Calu3 (cell line): ENCODE measurements at regions of chr17 and their contacts with region 1.

Region 1: DNA sequence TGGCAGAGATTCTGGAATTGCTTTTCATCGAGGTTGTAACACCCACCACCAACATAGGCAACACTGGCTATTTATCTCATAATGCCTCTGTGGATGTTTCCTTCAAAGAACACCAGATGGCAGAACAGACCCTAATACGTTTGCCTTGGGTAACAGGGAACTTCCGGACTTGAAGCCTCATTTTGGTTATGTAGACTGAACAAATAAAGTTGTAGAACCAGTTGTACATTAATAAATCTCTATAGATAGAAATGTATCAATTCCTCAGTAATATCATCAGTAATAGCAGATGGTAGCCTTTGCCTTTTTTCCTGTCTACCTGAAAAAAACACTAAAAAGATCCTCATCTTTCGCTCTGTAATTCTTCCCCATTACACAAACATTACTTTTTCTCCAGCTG is 25.9 kb upstream of the APOH start:
- DNase-seq: peak; percentile 39
- H3K4me3 Mint-ChIP-seq: no peak overlapping the region
- H3K27ac Mint-ChIP-seq: no peak overlapping the region
- H3K4me1 Mint-ChIP-seq: no peaks in the 10 kb centered on the region
- H3K27me3 Mint-ChIP-seq: no peaks in the 10 kb centered on the region
- CTCF ChIP-seq: peak; percentile 73

Region 2: GRCh38 chr17:66275651-66276050 is 20.5 kb after region 1 on chr17:
- CTCF ChIA-PET with region 1: interaction called, 5 read pairs
- intact Hi-C with region 1: loop called (anchors 1 kb)
- DNase-seq: peak; percentile 73
- H3K4me3 Mint-ChIP-seq: peak overlapping the region; percentile 33
- H3K27ac Mint-ChIP-seq: peak overlapping the region; percentile 70
- H3K4me1 Mint-ChIP-seq: peaks cover 36% of the 10 kb centered on the region
- H3K27me3 Mint-ChIP-seq: no peaks in the 10 kb centered on the region
- CTCF ChIP-seq: no peak

Region 3: DNA sequence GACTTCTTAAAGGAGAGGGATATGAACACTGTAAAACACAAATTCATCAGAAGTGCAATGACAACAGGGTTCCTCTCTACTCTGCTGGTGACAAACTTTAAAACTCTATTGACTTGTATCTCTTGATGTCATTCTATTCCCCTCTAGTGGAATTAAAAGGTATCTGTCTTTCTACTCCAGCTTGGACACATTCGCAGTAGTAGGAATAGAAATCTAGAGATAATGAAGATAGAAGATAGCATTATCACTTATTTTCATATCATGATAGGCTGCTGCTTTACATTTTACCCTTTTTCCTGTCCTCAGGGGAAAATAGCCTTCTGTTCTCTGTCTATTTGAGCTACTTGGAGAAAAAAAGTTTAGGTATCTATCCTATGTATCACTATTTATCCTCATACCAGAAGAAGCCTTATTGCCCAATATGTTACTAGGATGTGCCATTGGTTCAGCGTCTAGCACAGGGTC is 370.2 kb after region 1 on chr17:
- CTCF ChIA-PET with region 1: interaction called, 4 read pairs
- intact Hi-C with region 1: loop called (anchors 5 kb)
- DNase-seq: no peak
- H3K4me3 Mint-ChIP-seq: no peak overlapping the region
- H3K27ac Mint-ChIP-seq: no peak overlapping the region
- H3K4me1 Mint-ChIP-seq: peaks cover 9% of the 10 kb centered on the region
- H3K27me3 Mint-ChIP-seq: no peaks in the 10 kb centered on the region
- CTCF ChIP-seq: peak; percentile 31

Region 4: DNA sequence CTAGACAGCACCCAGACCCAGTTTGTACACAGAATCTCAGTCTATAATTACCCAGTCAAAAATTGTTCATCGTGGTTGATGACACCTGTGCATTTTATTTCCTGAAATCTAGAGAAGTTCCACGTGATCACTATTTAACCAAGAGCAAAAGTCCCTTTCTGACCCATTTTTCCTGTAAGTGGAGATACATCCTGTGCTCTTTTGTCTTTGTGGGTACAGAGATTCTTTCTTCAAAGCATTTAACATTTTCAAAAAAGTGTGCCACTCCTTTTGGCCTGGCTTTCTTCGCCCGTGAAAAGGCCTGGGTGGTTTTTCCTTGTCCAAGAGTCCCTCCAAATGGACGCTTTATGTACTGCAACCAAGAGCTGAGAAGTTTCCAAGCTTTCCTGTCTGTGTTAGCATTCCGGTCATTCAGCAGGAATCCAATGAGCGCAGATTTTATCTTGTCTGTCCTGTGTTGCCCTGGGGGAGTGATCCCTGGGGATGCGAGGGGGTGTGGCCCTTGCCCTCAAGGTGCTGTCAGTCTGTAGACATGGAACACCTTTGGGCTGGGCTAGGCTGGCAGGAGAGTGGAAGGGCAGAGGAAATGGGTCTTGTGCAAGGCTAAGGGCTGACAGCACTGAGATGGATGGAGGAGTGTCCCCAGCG is 418.7 kb after region 1 on chr17:
- CTCF ChIA-PET with region 1: interaction called, 7 read pairs
- intact Hi-C with region 1: loop called (anchors 1 kb)
- DNase-seq: peak; percentile 57
- H3K4me3 Mint-ChIP-seq: no peak overlapping the region
- H3K27ac Mint-ChIP-seq: no peak overlapping the region
- H3K4me1 Mint-ChIP-seq: peaks cover 50% of the 10 kb centered on the region
- H3K27me3 Mint-ChIP-seq: no peaks in the 10 kb centered on the region
- CTCF ChIP-seq: peak; percentile 66

Region 5: GRCh38 chr17:66906321-66907278 is 651.5 kb after region 1 on chr17:
- CTCF ChIA-PET with region 1: interaction called, 3 read pairs
- intact Hi-C with region 1: loop called (anchors 5 kb)
- DNase-seq: peak; percentile 81
- H3K4me3 Mint-ChIP-seq: no peak overlapping the region
- H3K27ac Mint-ChIP-seq: peak overlapping the region; percentile 12
- H3K4me1 Mint-ChIP-seq: peaks cover 41% of the 10 kb centered on the region
- H3K27me3 Mint-ChIP-seq: peaks cover 10% of the 10 kb centered on the region
- CTCF ChIP-seq: peak; percentile 78